ENCODE measurements at regions of chr12 and their contacts with region 1.

Region 1: GRCh38 chr12:111396726-111397445 is 8.8 kb upstream of the SH2B3 start:
- DNase-seq: peak; percentile 89
- ATAC-seq: peak; percentile 75
- H3K4me3 Mint-ChIP-seq: peak overlapping the region; percentile 70
- H3K27ac Mint-ChIP-seq: peak overlapping the region; percentile 87
- H3K4me1 Mint-ChIP-seq: peaks cover 36% of the 10 kb centered on the region
- H3K27me3 Mint-ChIP-seq: no peaks in the 10 kb centered on the region
- CTCF ChIP-seq: peak; percentile 99

Region 2: DNA sequence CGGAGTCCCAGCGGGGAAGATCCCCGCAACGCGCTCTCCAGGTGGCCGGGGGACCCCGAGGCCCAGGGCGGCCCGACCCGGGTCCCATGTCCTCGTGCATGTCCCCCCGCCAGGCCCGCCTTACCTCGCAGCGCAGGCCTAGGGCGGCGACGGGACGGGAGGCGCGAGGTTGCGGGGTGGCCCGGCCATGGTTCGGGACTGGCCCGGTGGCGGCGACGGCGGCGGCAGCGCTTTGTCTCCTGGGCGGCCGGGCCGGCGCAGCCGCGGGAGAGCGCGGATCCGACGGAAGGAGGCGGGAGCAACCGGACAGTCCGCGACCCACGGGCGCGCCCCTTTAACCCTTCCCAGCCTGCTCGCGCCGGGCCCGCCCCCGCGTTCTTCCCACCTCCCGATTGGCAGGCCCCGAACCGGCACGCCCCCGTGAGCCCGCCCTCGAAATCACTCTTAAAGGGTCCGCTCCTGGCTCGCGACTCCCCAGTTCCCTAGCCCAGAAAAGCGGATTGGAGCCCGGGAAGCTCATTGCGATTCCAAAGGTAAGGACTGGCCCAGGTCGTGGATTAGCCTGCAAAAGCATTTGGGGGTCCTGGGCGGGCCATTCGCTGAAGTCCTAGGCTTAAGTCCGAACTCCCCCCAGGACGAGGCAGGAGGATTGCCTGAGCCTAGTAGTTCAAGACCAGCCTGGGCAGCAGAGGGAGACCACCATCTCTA is 27.9 kb before region 1 on chr12 and contains the start of gene PHETA1:
- CTCF ChIA-PET with region 1: interaction called, 10 read pairs
- POLR2A ChIA-PET with region 1: interaction called, 3 read pairs
- intact Hi-C with region 1: no loop called
- DNase-seq: peak; percentile 88
- ATAC-seq: peak; percentile 92
- H3K4me3 Mint-ChIP-seq: peak within 1 kb of the TSS; percentile 73
- H3K27ac Mint-ChIP-seq: no peak within 1 kb of the TSS
- H3K4me1 Mint-ChIP-seq: peaks cover 12% of the 10 kb centered on the region
- H3K27me3 Mint-ChIP-seq: no peaks in the 10 kb centered on the region
- CTCF ChIP-seq: peak; percentile 21
- total RNA-seq, gene PHETA1: 1.2 to 1.7 TPM

Region 3: DNA sequence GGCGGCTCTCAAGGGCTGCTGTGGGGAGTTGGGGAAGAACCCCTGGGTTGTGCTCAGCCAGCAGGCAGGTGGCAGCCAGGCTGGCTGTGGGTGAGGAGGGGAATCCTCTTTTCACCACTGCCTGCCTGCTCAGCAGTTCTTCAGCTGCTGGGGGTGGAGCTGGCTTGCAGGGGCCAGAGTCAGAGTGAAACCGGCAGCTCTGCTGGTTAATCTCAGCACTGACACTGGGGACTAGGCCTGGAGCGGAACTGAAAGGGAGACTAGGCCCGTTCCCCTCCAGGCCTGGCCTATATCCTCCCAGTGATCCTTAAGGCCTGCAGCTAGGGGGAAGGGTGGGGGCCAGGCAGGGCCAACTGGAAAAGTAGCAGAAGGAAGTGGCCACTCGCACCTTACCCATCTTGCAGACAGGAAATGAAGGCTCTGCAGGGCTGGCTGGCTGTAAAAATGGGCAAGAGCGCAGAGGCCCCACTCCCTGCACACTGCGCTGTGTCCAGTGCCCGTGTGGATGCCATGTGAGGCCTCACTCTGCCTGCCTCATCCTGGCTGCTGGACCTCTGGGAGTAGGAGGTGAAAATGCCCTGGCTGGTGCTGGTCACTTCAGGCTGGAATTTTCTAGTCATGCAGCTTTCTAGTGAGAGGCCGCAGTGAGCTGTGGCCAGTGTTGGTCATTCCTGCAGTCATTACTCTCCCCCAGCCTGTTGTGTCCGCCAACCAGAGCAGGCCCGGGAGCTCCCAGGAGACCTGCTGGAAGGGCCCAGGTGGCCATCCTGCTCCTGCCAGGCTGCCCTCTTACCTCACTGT is 48.2 kb after region 1 on chr12:
- CTCF ChIA-PET with region 1: interaction called, 1,222 read pairs
- POLR2A ChIA-PET with region 1: interaction called, 89 read pairs
- intact Hi-C with region 1: loop called (anchors 5 kb)
- DNase-seq: peak; percentile 96
- ATAC-seq: peak; percentile 90
- H3K4me3 Mint-ChIP-seq: peak overlapping the region; percentile 26
- H3K27ac Mint-ChIP-seq: peak overlapping the region; percentile 69
- H3K4me1 Mint-ChIP-seq: peaks cover 85% of the 10 kb centered on the region
- H3K27me3 Mint-ChIP-seq: no peaks in the 10 kb centered on the region
- CTCF ChIP-seq: no peak

Region 4: DNA sequence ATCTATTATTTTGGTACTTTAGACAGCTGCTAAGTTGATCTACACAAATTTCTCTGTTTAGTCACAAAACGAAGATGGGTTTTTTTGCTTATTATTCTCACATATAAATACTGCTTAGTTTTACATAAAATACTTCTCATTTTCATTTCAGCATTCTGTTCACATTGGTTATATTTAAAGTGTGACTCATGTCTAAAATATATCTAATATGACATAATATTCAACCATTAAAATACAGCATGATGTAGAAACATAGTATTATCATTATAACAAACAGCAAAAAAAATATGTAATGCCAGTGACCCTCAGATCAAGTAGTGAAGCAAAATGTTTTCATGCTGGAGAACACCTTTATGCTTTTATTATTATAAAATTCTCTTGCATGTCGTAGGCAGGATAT is 72.5 kb after region 1 on chr12:
- CTCF ChIA-PET with region 1: interaction called, 39 read pairs
- POLR2A ChIA-PET with region 1: no interaction called
- intact Hi-C with region 1: no loop called
- DNase-seq: no peak
- ATAC-seq: no peak
- H3K4me3 Mint-ChIP-seq: no peak overlapping the region
- H3K27ac Mint-ChIP-seq: no peak overlapping the region
- H3K4me1 Mint-ChIP-seq: peaks cover 7% of the 10 kb centered on the region
- H3K27me3 Mint-ChIP-seq: no peaks in the 10 kb centered on the region
- CTCF ChIP-seq: no peak

Region 5: DNA sequence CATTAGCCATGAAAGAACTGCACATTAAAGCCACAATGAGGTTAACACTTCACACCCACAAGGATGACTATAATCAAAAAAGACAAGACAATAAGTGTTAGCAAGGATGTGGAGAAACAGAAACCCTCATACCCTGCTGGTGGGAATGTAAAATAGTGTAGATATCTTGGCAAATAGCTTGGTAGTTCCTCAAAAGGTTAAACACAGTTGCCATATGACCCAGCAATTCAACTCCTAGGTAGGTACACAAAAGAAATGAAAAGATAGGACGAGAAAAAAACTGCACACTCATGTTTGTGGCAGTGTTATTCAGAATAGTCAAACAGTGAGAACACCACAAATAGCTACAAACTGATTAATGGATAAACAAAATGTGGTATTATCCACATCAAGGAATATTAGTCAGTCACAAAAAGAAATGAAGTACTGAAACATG is 108.7 kb after region 1 on chr12:
- CTCF ChIA-PET with region 1: interaction called, 14 read pairs
- POLR2A ChIA-PET with region 1: no interaction called
- intact Hi-C with region 1: no loop called
- DNase-seq: peak; percentile 7
- ATAC-seq: peak; percentile 85
- H3K4me3 Mint-ChIP-seq: no peak overlapping the region
- H3K27ac Mint-ChIP-seq: no peak overlapping the region
- H3K4me1 Mint-ChIP-seq: peaks cover 12% of the 10 kb centered on the region
- H3K27me3 Mint-ChIP-seq: no peaks in the 10 kb centered on the region
- CTCF ChIP-seq: peak; percentile 12

Region 6: DNA sequence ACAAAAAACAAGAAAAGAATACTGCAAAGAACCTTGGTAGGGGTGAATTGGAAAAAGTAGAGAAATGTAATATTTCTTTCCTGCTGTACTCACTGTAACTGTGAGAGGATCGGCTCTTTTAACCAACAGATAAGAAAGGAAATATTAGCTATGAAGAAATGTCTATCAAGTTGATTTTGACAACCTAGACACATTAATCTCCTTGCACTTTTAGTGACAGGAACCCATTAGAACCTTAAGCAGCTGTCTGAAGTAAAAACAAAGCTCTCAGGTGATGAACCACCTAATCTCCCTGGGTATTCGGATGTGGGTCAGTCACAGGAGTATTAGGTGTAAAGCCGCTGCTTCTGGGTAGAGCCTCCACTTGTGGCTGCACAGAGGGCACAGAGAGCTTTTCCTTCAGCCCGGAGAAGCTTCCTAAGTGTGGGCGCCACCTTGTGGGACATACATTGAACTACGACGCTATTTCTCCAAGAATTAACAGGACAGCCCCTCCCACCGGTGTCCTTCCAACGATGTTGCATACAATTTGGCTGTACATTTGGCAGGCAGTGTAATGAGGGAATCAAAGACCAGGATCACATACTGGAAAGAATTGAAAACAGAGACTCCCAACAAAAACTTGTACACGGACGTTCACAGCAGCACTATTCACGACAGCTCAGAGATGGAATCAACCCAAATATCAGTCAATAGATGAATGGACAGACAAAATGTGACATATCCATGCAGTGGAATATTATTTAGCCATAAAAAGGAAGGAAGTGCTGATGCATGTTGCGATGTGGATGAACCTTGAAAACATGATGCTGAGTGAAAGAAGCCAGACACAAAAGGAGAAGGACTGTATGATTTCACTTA is 416.2 kb after region 1 on chr12:
- CTCF ChIA-PET with region 1: interaction called, 18 read pairs
- POLR2A ChIA-PET with region 1: no interaction called
- intact Hi-C with region 1: no loop called
- DNase-seq: peak; percentile 84
- ATAC-seq: peak; percentile 99
- H3K4me3 Mint-ChIP-seq: no peak overlapping the region
- H3K27ac Mint-ChIP-seq: no peak overlapping the region
- H3K4me1 Mint-ChIP-seq: peaks cover 10% of the 10 kb centered on the region
- H3K27me3 Mint-ChIP-seq: no peaks in the 10 kb centered on the region
- CTCF ChIP-seq: peak; percentile 83